Heart left ventricle (tissue), 16 donors: ENCODE measurements at regions of chr1 and their contacts with region 1.

Region 1: GRCh38 chr1:96236156-96236739 is 485.3 kb upstream of the PTBP2 start:
- DNase-seq: no peak
- ATAC-seq: peak in 1 of 4 donors; percentile 49
- H3K4me3 ChIP-seq: no peak overlapping the region
- H3K27ac ChIP-seq: no peak overlapping the region
- H3K4me1 ChIP-seq: no peaks in the 10 kb centered on the region
- H3K27me3 ChIP-seq: peaks cover 0 to 4% (median 0%) of the 10 kb centered on the region in 9 donors
- CTCF ChIP-seq: peak in 11 of 12 donors; percentile 23 to 62 (median 48)
- POLR2A ChIP-seq: no peak

Region 2: DNA sequence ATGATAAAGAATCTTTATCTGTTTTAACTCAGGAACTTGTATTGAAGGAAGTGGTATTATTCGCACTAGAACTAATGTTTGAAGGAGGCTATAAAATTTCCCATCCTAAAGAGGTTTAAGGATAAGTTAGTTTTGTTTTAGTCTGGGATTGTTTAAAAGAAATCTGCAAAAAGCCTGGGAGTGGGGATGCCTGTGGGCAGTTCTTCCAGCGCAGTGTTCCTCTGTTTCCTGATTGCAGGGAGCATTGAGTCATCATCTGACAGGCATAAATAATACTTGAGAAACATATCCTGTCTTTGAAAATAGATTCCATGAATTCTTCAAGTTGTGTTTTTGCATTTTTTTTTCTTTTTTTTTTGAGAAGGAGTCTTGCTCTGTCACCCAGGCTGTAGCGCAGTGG is 134.5 kb after region 1 on chr1:
- intact Hi-C with region 1: no loop called
- DNase-seq: no peak
- ATAC-seq: no peak
- H3K4me3 ChIP-seq: no peak overlapping the region
- H3K27ac ChIP-seq: no peak overlapping the region
- H3K4me1 ChIP-seq: no peaks in the 10 kb centered on the region
- H3K27me3 ChIP-seq: no peaks in the 10 kb centered on the region
- CTCF ChIP-seq: no peak
- POLR2A ChIP-seq: no peak

Region 3: GRCh38 chr1:96756789-96757188 is 520.5 kb after region 1 on chr1:
- intact Hi-C with region 1: loop called in 1 of 10 experiments (anchors 10 kb)
- DNase-seq: no peak
- ATAC-seq: no peak
- H3K4me3 ChIP-seq: no peak overlapping the region
- H3K27ac ChIP-seq: no peak overlapping the region
- H3K4me1 ChIP-seq: no peaks in the 10 kb centered on the region
- H3K27me3 ChIP-seq: no peaks in the 10 kb centered on the region
- CTCF ChIP-seq: peak in 5 of 12 donors; percentile 7 to 36 (median 18)
- POLR2A ChIP-seq: no peak

Region 4: DNA sequence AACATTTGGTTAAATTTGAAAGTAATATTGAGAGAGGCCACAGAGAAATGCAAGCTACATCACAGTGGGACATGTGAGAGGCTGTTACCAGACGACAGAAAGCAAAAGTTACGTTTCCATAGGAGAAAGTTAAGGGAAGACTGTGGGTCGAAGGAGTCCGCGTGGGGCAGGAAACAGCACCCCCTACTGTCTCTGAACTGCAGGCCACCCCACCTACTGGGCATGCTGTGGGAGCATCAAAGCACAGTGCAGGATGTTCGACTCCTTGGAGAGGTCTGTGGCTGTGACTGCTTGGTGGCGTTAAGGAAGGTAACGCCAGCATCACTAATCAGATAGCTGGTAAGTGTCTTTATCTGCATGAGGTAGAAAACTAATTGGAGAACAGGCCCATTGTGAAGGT is 609.2 kb after region 1 on chr1:
- intact Hi-C with region 1: loop called in 2 of 10 experiments (anchors 5 to 10 kb)
- DNase-seq: no peak
- ATAC-seq: peak in 3 of 4 donors; percentile 41 to 62 (median 51)
- H3K4me3 ChIP-seq: no peak overlapping the region
- H3K27ac ChIP-seq: no peak overlapping the region
- H3K4me1 ChIP-seq: peaks cover 0 to 3% (median 0%) of the 10 kb centered on the region in 12 donors
- H3K27me3 ChIP-seq: no peaks in the 10 kb centered on the region
- CTCF ChIP-seq: peak; percentile 40 to 67 (median 54)
- POLR2A ChIP-seq: no peak